H1 (cell line): ENCODE measurements at regions of chr6 and their contacts with region 1.

Region 1: DNA sequence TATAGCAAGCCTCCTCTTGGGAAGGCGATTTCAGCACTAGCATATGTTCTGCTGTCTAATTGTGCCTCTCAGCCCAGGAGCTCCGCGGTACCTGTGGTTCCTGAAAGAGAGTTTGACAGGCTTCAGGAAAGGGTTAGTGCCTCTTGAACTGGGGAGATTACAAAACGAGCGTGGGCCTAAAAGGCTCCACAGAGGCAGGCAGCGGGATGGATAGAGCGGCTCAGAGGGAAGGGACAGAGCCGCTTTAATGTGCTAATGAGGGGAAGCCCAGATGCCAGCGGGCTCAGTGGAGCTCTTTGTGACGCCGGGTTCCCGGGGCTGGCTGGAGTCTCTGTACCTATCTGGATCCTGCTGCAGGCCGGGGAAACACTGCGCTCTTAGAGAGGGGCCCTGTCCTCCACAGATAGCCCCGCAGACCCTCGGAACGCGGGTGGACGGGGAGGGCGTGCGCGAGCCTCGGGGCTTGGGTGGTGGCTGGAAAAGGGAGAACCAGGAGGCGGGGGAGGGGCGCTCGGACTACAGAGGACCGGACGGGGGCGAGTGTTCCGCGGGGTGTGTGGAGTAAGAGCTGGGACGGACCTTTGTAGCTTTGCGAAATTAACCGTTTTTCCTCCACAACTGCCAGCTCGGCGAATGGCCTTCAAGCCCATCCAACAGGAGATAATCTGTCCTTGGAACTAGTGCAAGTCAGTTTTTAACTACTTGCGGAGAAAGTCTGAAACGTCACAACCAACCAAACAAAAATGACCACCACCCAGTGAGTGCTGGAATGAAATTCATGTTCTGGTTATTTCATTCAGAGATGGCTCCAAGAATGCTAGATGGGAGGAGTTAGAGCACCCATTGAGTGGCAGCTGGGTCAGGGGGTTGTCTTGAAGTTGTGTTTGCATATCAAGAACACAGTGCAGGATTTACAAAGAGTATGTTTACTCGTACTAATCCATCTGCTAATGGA is 13.0 kb downstream of the SLC35F1 start:
- DNase-seq: peak in 1 of 2 experiments; percentile 82
- H3K4me3 ChIP-seq: peak overlapping the region; percentile 40 to 70 (median 48)
- H3K27ac ChIP-seq: peak overlapping the region; percentile 47; the same call in 1 of the 2 replicates
- H3K4me1 ChIP-seq: peaks cover 0 to 9% (median 5%) of the 10 kb centered on the region in 4 experiments; a peak in 4 of 7 replicates
- H3K27me3 ChIP-seq: peaks cover 5 to 22% (median 19%) of the 10 kb centered on the region in 4 experiments; a peak in 6 of 7 replicates
- CTCF ChIP-seq: no peak
- EP300 ChIP-seq: peak in 1 of 2 experiments; percentile 88; a peak in 1 of 3 replicates
- POLR2A ChIP-seq: no peak; a peak in 1 of 3 replicates
- RAD21 ChIP-seq: 0 out of 4 replicates have a peak, but pooled peaks of 1 of the 2 experiments have one; percentile 1

Region 2: GRCh38 chr6:117573006-117573680 is 346.9 kb before region 1 on chr6:
- CTCF ChIA-PET with region 1: no interaction called
- POLR2A ChIA-PET with region 1: no interaction called
- DNase-seq: no peak
- H3K4me3 ChIP-seq: no peak overlapping the region
- H3K27ac ChIP-seq: no peak overlapping the region
- H3K4me1 ChIP-seq: no peaks in the 10 kb centered on the region
- H3K27me3 ChIP-seq: peaks cover 0 to 2% (median 0%) of the 10 kb centered on the region in 4 experiments; a peak in 1 of 7 replicates
- CTCF ChIP-seq: no peak
- EP300 ChIP-seq: no peak
- POLR2A ChIP-seq: no peak
- RAD21 ChIP-seq: no peak

Region 3: DNA sequence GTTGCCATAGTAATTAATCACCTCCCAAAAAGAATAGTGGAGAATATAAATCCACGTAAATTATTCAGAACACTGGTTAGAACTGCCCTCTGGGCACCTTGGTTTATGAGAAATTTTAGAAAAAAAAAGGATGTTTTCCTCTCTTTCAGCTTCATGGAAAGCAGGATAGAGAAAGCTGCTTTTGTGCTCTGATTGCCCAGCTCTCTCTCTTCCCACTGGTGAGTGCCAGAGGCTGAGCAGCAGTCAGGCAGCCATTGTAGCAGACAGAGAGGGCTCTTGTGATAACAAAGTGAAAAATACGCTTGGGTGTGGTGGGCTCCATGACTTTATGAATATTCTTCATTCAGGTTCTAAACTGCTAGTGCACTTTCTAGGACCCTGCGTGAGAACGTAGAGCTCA is 13.4 kb after region 1 on chr6:
- CTCF ChIA-PET with region 1: interaction called, 14 read pairs
- POLR2A ChIA-PET with region 1: interaction called, 3 read pairs
- DNase-seq: no peak
- H3K4me3 ChIP-seq: no peak overlapping the region
- H3K27ac ChIP-seq: no peak overlapping the region
- H3K4me1 ChIP-seq: peaks cover 0 to 6% (median 2%) of the 10 kb centered on the region in 4 experiments; a peak in 5 of 7 replicates
- H3K27me3 ChIP-seq: no peaks in the 10 kb centered on the region
- CTCF ChIP-seq: no peak
- EP300 ChIP-seq: no peak
- POLR2A ChIP-seq: no peak
- RAD21 ChIP-seq: no peak

Region 4: DNA sequence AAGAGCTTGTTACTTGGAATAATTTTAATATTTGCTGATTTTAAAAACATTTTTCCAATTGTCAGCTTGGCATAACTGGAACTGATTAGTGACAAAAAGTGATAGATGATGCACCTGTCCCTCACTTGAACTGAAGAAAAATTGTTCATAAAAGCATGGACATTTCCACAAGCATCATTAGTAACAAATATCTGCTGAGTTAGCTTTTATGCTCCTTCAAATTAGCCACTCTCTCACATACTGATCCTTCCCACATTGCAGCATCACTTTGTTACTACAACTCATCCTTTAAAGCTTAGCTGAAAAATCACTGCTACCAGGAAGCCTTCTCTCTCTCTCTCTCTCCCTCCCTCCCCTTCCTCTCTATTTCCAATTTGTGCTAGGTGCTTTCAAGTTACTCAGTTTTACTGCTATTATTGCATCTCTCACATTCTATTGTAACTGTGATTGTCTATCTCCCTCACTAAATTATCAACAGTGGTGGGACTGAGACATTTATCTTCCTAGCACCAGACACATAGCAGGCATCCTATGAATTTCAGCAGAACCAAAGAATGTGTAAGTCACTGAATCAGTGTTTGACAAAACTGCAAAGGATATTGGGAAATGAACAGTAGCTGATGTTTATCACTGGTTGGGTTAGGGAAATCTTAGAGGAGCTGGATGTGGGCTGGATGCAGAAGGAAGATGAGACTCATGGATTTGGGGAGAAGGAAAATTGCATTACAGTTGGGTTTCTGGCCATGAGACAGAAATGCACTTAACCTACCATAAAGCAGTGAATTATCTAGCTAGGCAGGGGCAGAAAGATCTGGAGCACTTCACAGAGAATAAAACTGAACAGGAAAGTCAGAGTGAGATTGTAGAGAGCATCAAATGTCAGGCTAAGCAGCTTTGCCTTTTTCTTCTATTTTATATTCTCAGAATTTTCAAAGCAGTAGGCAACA is 499.7 kb after region 1 on chr6:
- CTCF ChIA-PET with region 1: no interaction called
- POLR2A ChIA-PET with region 1: no interaction called
- DNase-seq: no peak
- H3K4me3 ChIP-seq: no peak overlapping the region
- H3K27ac ChIP-seq: no peak overlapping the region
- H3K4me1 ChIP-seq: no peaks in the 10 kb centered on the region
- H3K27me3 ChIP-seq: no peaks in the 10 kb centered on the region
- CTCF ChIP-seq: no peak
- EP300 ChIP-seq: no peak
- POLR2A ChIP-seq: no peak
- RAD21 ChIP-seq: no peak